CD4-positive, alpha-beta memory T cell (primary cell): ENCODE measurements at regions of chr6 and their contacts with region 1.

Region 1: GRCh38 chr6:136643850-136644596 is 93.8 kb upstream of the MAP7 start:
- DNase-seq: peak; percentile 68 to 76 (median 70)
- H3K4me3 ChIP-seq: no peak overlapping the region
- H3K4me3 Mint-ChIP-seq: no peak overlapping the region
- H3K27ac ChIP-seq: peak overlapping the region; percentile 4
- H3K27ac Mint-ChIP-seq: peak overlapping the region; percentile 30 to 75 (median 61)
- H3K4me1 ChIP-seq: peaks cover 19% of the 10 kb centered on the region
- H3K4me1 Mint-ChIP-seq: peaks cover 0 to 5% (median 4%) of the 10 kb centered on the region in 4 donors
- H3K27me3 ChIP-seq: no peaks in the 10 kb centered on the region
- H3K27me3 Mint-ChIP-seq: no peaks in the 10 kb centered on the region

Region 2: DNA sequence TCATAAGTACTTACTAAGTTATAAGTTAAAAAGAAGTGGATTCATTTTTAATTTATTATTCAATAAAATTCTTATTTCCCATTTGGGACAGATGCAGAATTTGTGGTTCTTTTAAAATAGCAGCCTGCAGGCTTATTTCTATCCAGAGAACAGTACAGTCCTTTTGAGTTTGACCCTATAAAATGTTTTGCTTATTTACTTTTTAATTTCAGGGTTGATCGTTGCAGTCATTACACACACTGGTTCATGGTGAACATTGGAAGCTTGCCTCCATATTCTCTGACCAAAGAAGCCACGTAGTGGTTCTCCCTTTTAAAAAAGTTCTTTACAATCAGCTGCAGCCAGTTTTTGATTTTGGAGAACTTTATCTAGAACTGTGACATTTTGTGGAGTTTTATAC is 915.4 kb before region 1 on chr6:
- CTCF ChIA-PET with region 1: no interaction called
- POLR2A ChIA-PET with region 1: no interaction called
- intact Hi-C with region 1: no loop called
- DNase-seq: no peak
- H3K4me3 ChIP-seq: no peak overlapping the region
- H3K4me3 Mint-ChIP-seq: no peak overlapping the region
- H3K27ac ChIP-seq: no peak overlapping the region
- H3K27ac Mint-ChIP-seq: no peak overlapping the region
- H3K4me1 ChIP-seq: no peaks in the 10 kb centered on the region
- H3K4me1 Mint-ChIP-seq: no peaks in the 10 kb centered on the region
- H3K27me3 ChIP-seq: no peaks in the 10 kb centered on the region
- H3K27me3 Mint-ChIP-seq: peaks cover 0 to 1% of the 10 kb centered on the region in 2 donors

Region 3: DNA sequence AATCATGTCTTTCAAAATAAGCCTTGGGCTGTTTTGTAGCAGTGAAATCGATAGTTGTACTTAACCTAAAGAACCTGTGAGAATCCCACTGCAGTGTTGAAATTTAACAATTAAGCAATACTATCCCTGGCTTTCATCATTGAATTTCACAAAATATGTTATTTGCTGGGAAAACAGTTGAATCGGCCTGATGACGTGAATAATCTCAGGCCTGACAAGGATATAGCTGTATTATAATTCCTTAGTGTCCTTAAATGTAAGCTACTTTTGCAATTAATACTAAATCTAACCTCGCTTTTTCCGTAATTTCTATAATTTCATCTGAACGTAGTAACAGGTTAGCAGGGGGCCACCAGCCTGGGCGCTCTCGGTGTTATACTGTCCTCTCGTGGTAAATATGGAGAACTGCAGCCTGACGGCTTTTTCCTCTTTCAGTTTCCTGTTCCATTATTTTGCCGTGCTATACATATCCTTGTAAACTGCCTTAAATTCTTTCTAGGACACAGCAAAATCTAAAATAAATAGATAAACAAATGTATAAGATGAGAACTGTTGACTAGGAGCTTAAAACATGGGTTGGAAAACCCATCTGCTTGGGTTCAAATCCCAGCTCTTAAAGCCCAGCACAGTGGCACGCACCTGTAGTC is 417.9 kb before region 1 on chr6:
- CTCF ChIA-PET with region 1: no interaction called
- POLR2A ChIA-PET with region 1: no interaction called
- intact Hi-C with region 1: no loop called
- DNase-seq: peak in 4 of 5 donors; percentile 53 to 57 (median 55)
- H3K4me3 ChIP-seq: peak overlapping the region in 1 of 2 donors; percentile 29
- H3K4me3 Mint-ChIP-seq: peak overlapping the region in 7 of 8 donors; percentile 49 to 77 (median 66)
- H3K27ac ChIP-seq: no peak overlapping the region
- H3K27ac Mint-ChIP-seq: peak overlapping the region in 2 of 7 donors; percentile 2 to 72
- H3K4me1 ChIP-seq: no peaks in the 10 kb centered on the region
- H3K4me1 Mint-ChIP-seq: peaks cover 3 to 10% (median 4%) of the 10 kb centered on the region in 4 donors
- H3K27me3 ChIP-seq: no peaks in the 10 kb centered on the region
- H3K27me3 Mint-ChIP-seq: no peaks in the 10 kb centered on the region

Region 4: DNA sequence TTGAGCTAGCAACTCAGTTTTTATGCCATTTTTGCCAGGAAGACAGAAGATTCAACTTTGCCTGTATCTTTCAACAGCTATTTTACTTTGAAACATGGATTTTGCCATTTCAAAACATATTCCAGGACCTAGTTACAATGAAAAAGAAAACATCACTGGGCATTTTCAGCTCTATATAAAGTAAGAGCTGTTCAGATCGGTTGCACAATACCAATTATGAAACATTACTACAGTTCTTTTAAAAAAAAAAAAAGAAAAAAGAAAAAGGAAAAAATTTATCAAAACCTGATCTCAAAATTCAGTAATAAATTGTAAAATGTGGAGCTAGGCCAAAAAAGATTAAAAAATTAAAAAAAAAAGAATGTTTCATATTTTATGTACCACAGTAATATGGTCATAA is 370.0 kb before region 1 on chr6:
- CTCF ChIA-PET with region 1: no interaction called
- POLR2A ChIA-PET with region 1: no interaction called
- intact Hi-C with region 1: no loop called
- DNase-seq: no peak
- H3K4me3 ChIP-seq: no peak overlapping the region
- H3K4me3 Mint-ChIP-seq: no peak overlapping the region
- H3K27ac ChIP-seq: no peak overlapping the region
- H3K27ac Mint-ChIP-seq: peak overlapping the region in 1 of 7 donors; percentile 41
- H3K4me1 ChIP-seq: peaks cover 12% of the 10 kb centered on the region
- H3K4me1 Mint-ChIP-seq: peaks cover 18 to 48% (median 35%) of the 10 kb centered on the region in 4 donors
- H3K27me3 ChIP-seq: no peaks in the 10 kb centered on the region
- H3K27me3 Mint-ChIP-seq: no peaks in the 10 kb centered on the region

Region 5: GRCh38 chr6:136306466-136306865 is 337.6 kb before region 1 on chr6:
- CTCF ChIA-PET with region 1: no interaction called
- POLR2A ChIA-PET with region 1: no interaction called
- intact Hi-C with region 1: no loop called
- DNase-seq: no peak
- H3K4me3 ChIP-seq: no peak overlapping the region
- H3K4me3 Mint-ChIP-seq: no peak overlapping the region
- H3K27ac ChIP-seq: no peak overlapping the region
- H3K27ac Mint-ChIP-seq: peak overlapping the region in 1 of 7 donors; percentile 73
- H3K4me1 ChIP-seq: no peaks in the 10 kb centered on the region
- H3K4me1 Mint-ChIP-seq: no peaks in the 10 kb centered on the region
- H3K27me3 ChIP-seq: no peaks in the 10 kb centered on the region
- H3K27me3 Mint-ChIP-seq: no peaks in the 10 kb centered on the region

Region 6: GRCh38 chr6:136628996-136629395 is 15.0 kb before region 1 on chr6:
- CTCF ChIA-PET with region 1: interaction called, 23 read pairs
- POLR2A ChIA-PET with region 1: no interaction called
- intact Hi-C with region 1: no loop called
- DNase-seq: no peak
- H3K4me3 ChIP-seq: no peak overlapping the region
- H3K4me3 Mint-ChIP-seq: no peak overlapping the region
- H3K27ac ChIP-seq: no peak overlapping the region
- H3K27ac Mint-ChIP-seq: no peak overlapping the region
- H3K4me1 ChIP-seq: no peaks in the 10 kb centered on the region
- H3K4me1 Mint-ChIP-seq: peaks cover 0 to 8% (median 1%) of the 10 kb centered on the region in 4 donors
- H3K27me3 ChIP-seq: no peaks in the 10 kb centered on the region
- H3K27me3 Mint-ChIP-seq: no peaks in the 10 kb centered on the region

Region 7: DNA sequence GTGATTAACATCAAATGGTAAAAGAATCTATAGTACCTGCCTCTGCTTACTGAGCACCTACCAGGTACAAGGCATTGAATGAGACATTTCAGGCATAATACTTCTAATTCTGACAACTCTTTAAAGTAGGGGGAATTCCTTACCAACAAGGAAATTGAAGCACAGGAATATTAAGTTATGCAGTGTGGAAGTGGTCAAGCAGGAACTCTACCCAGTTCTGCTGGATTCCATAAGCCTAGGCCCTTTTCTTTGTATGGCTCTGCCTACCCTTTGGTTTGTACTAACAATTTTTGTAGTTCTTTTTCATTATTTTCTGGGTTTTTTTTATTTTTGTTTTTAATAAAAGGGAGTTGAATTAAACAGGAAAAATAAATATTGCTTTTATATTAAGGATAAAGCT is 33.8 kb after region 1 on chr6:
- CTCF ChIA-PET with region 1: interaction called, 17 read pairs
- POLR2A ChIA-PET with region 1: no interaction called
- intact Hi-C with region 1: no loop called
- DNase-seq: no peak
- H3K4me3 ChIP-seq: no peak overlapping the region
- H3K4me3 Mint-ChIP-seq: no peak overlapping the region
- H3K27ac ChIP-seq: no peak overlapping the region
- H3K27ac Mint-ChIP-seq: no peak overlapping the region
- H3K4me1 ChIP-seq: no peaks in the 10 kb centered on the region
- H3K4me1 Mint-ChIP-seq: peaks cover 0 to 11% (median 7%) of the 10 kb centered on the region in 4 donors
- H3K27me3 ChIP-seq: no peaks in the 10 kb centered on the region
- H3K27me3 Mint-ChIP-seq: no peaks in the 10 kb centered on the region

Region 8: GRCh38 chr6:136723780-136724179 is 79.8 kb after region 1 on chr6:
- CTCF ChIA-PET with region 1: interaction called, 23 read pairs
- POLR2A ChIA-PET with region 1: interaction called, 3 read pairs
- intact Hi-C with region 1: no loop called
- DNase-seq: peak in 4 of 5 donors; percentile 9 to 49 (median 32)
- H3K4me3 ChIP-seq: no peak overlapping the region
- H3K4me3 Mint-ChIP-seq: peak overlapping the region in 5 of 8 donors; percentile 12 to 54 (median 39)
- H3K27ac ChIP-seq: no peak overlapping the region
- H3K27ac Mint-ChIP-seq: peak overlapping the region in 4 of 7 donors; percentile 28 to 54 (median 50)
- H3K4me1 ChIP-seq: peaks cover 37% of the 10 kb centered on the region
- H3K4me1 Mint-ChIP-seq: peaks cover 37 to 61% (median 45%) of the 10 kb centered on the region in 4 donors
- H3K27me3 ChIP-seq: no peaks in the 10 kb centered on the region
- H3K27me3 Mint-ChIP-seq: no peaks in the 10 kb centered on the region

Region 9: GRCh38 chr6:136751522-136751956 is 107.5 kb after region 1 on chr6:
- CTCF ChIA-PET with region 1: interaction called, 15 read pairs
- POLR2A ChIA-PET with region 1: interaction called, 6 read pairs
- intact Hi-C with region 1: loop called (anchors 5 kb)
- DNase-seq: peak; percentile 42 to 76 (median 62)
- H3K4me3 ChIP-seq: peak overlapping the region in 1 of 2 donors; percentile 23
- H3K4me3 Mint-ChIP-seq: peak overlapping the region; percentile 59 to 91 (median 75)
- H3K27ac ChIP-seq: peak overlapping the region; percentile 51
- H3K27ac Mint-ChIP-seq: peak overlapping the region; percentile 79 to 97 (median 91)
- H3K4me1 ChIP-seq: peaks cover 90% of the 10 kb centered on the region
- H3K4me1 Mint-ChIP-seq: peaks cover 66 to 94% (median 83%) of the 10 kb centered on the region in 4 donors
- H3K27me3 ChIP-seq: no peaks in the 10 kb centered on the region
- H3K27me3 Mint-ChIP-seq: no peaks in the 10 kb centered on the region

Region 10: DNA sequence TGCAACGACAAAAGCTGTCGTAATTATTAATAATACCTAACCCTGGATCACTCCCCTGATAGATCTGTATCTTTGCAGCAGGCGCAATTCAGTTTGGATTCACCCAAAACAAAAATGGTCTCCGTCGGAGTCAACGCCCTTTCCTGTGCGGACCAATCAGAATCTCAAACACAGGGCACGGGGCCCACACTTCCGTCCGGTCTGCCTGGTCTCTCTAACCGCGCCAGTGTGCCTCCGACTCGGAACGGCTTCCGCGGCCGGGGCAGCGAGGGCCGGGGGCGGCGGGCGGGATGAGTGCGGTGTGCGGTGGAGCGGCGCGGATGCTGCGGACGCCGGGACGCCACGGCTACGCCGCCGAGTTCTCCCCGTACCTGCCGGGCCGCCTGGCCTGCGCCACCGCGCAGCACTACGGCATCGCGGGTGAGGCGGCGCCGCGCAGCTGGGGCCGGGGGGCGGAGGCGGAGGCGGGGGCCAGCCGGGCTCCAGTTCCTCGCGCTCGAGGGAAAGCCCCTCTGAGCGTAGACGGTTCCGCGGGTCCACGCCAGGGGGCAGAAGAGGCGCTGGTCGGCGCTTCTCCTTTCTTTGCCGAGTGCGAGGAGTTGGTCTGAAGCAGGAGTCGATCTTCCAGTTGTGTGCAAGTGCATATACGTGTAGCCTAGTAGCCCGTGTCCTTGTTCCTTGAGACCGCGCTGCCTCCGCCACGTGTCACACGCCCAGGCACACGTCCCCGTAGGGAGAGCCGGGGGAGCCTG is 178.5 kb after region 1 on chr6 and contains the start of gene PEX7:
- CTCF ChIA-PET with region 1: interaction called, 34 read pairs
- POLR2A ChIA-PET with region 1: interaction called, 19 read pairs
- intact Hi-C with region 1: loop called (anchors 1 kb)
- DNase-seq: peak; percentile 90 to 94 (median 93)
- H3K4me3 ChIP-seq: peak within 1 kb of the TSS; percentile 58 to 82
- H3K4me3 Mint-ChIP-seq: peak within 1 kb of the TSS; percentile 93 to 99 (median 96)
- H3K27ac ChIP-seq: peak within 1 kb of the TSS; percentile 87
- H3K27ac Mint-ChIP-seq: peak within 1 kb of the TSS; percentile 94 to 99 (median 97)
- H3K4me1 ChIP-seq: peaks cover 12% of the 10 kb centered on the region
- H3K4me1 Mint-ChIP-seq: peaks cover 13 to 46% (median 22%) of the 10 kb centered on the region in 4 donors
- H3K27me3 ChIP-seq: no peaks in the 10 kb centered on the region
- H3K27me3 Mint-ChIP-seq: peaks cover 6 to 8% of the 10 kb centered on the region in 2 donors
- total RNA-seq, gene PEX7: 4.4 to 5.8 TPM